ENCODE measurements at regions of chr11 and their contacts with region 1.

Region 1: GRCh38 chr11:33257897-33258630 is 883 bp downstream of the HIPK3 start:
- DNase-seq: peak; percentile 90 to 94
- ATAC-seq: peak; percentile 82 to 88 (median 84)
- H3K4me3 ChIP-seq: peak overlapping the region; percentile 95
- H3K27ac ChIP-seq: peak overlapping the region; percentile 100
- H3K4me1 ChIP-seq: peaks cover 39% of the 10 kb centered on the region
- H3K27me3 ChIP-seq: no peaks in the 10 kb centered on the region
- CTCF ChIP-seq: peak; percentile 36

Region 2: DNA sequence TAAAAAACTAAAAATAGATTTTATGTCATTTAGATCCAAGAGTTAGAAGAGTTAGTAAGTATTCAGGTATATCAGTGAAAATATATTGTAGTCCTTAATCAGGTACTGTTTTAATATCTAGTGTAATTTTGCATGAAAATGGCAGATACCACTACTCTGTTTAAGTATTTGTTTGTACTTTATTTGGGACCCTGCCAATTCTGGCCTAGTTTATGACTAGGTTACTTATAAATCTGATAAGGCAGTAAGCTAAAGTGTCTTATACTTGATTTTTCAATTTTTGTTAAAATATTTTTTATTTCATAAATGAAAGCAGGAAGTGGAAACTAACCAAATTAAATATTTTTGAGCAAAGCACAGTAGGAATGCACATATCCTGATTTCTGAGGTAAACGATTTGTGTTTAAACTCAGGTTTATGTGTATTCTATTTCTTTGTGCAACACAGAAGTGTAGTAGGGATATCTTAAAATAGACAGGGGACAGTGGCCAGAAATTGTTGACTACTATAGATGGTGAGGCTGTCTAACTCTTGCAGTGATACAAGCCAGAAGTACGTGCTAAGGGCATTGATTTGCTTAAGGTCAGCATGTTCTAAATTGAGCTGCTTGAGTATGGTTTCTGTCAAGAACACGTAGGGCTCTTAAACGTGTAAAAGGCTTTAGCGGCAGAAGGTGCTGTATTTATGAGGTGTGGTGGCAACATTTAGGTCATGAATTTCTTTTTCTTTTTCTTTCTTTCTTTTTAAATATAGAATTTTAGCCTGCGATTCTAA is 33.1 kb after region 1 on chr11:
- intact Hi-C with region 1: loop called in 1 of 2 experiments (anchors 1 kb)
- DNase-seq: no peak
- ATAC-seq: peak; percentile 95 to 99 (median 98)
- H3K4me3 ChIP-seq: peak overlapping the region; percentile 46
- H3K27ac ChIP-seq: peak overlapping the region; percentile 82
- H3K4me1 ChIP-seq: peaks cover 52% of the 10 kb centered on the region
- H3K27me3 ChIP-seq: no peaks in the 10 kb centered on the region
- CTCF ChIP-seq: no peak

Region 3: GRCh38 chr11:33329705-33330329 is 71.8 kb after region 1 on chr11:
- intact Hi-C with region 1: loop called (anchors 5 kb)
- DNase-seq: no peak
- ATAC-seq: peak; percentile 70 to 84 (median 76)
- H3K4me3 ChIP-seq: no peak overlapping the region
- H3K27ac ChIP-seq: peak overlapping the region; percentile 23
- H3K4me1 ChIP-seq: peaks cover 79% of the 10 kb centered on the region
- H3K27me3 ChIP-seq: no peaks in the 10 kb centered on the region
- CTCF ChIP-seq: peak; percentile 62